ENCODE measurements at regions of chr14 and their contacts with region 1.

Region 1: DNA sequence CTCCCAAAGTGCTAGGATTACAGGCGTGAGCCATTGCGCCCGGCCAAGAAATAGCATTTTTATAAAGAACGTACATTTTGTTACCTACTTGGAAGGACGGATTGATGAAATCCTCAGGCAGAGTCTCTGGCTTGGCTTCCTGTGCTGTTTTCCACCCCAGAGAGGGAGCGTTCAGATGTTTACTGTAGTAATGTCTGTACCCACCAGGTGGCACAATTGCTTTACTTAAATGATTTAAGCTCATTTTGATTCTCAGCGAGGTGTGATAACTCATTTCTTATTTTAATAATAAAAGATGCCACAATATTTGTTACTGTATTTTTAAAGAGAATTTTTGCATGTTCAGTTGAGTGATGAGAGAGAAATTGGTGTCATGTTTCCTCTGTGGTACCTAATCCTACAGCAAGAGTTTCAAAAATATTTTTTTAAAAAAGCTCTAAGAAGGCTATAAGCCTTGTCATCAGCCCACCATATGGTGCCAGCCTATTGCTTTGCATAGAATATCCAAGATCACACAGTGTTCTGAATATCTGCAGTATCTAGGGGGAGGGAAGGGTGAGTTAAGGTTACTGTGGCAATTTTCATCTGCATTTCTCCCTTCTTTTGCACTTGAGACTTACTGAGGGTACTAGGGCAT is 82.6 kb upstream of the TRAF3 start:
- DNase-seq: peak; percentile 8 to 78 (median 59)
- ATAC-seq: peak; percentile 84
- H3K4me3 ChIP-seq: no peak overlapping the region
- H3K4me3 Mint-ChIP-seq: no peak overlapping the region
- H3K27ac ChIP-seq: no peak overlapping the region
- H3K27ac Mint-ChIP-seq: no peak overlapping the region
- H3K4me1 ChIP-seq: peaks cover 8% of the 10 kb centered on the region
- H3K4me1 Mint-ChIP-seq: peaks cover 38% of the 10 kb centered on the region
- H3K27me3 ChIP-seq: no peaks in the 10 kb centered on the region
- H3K27me3 Mint-ChIP-seq: no peaks in the 10 kb centered on the region
- CTCF ChIP-seq: peak; percentile 86

Region 2: GRCh38 chr14:101961011-101961721 is 733.5 kb before region 1 on chr14:
- CTCF ChIA-PET with region 1: no interaction called
- POLR2A ChIA-PET with region 1: no interaction called
- intact Hi-C with region 1: no loop called
- DNase-seq: peak; percentile 54 to 89 (median 78)
- ATAC-seq: peak; percentile 41
- H3K4me3 ChIP-seq: no peak overlapping the region
- H3K4me3 Mint-ChIP-seq: no peak overlapping the region
- H3K27ac ChIP-seq: no peak overlapping the region
- H3K27ac Mint-ChIP-seq: no peak overlapping the region
- H3K4me1 ChIP-seq: peaks cover 15% of the 10 kb centered on the region
- H3K4me1 Mint-ChIP-seq: peaks cover 23% of the 10 kb centered on the region
- H3K27me3 ChIP-seq: no peaks in the 10 kb centered on the region
- H3K27me3 Mint-ChIP-seq: no peaks in the 10 kb centered on the region
- CTCF ChIP-seq: peak; percentile 91

Region 3: GRCh38 chr14:102055216-102055918 is 639.3 kb before region 1 on chr14:
- CTCF ChIA-PET with region 1: no interaction called
- POLR2A ChIA-PET with region 1: no interaction called
- intact Hi-C with region 1: no loop called
- DNase-seq: no peak
- ATAC-seq: no peak
- H3K4me3 ChIP-seq: no peak overlapping the region
- H3K4me3 Mint-ChIP-seq: no peak overlapping the region
- H3K27ac ChIP-seq: no peak overlapping the region
- H3K27ac Mint-ChIP-seq: peak overlapping the region; percentile 37
- H3K4me1 ChIP-seq: no peaks in the 10 kb centered on the region
- H3K4me1 Mint-ChIP-seq: peaks cover 26% of the 10 kb centered on the region
- H3K27me3 ChIP-seq: no peaks in the 10 kb centered on the region
- H3K27me3 Mint-ChIP-seq: no peaks in the 10 kb centered on the region
- CTCF ChIP-seq: no peak

Region 4: GRCh38 chr14:102672410-102672960 is 22.2 kb before region 1 on chr14:
- CTCF ChIA-PET with region 1: no interaction called
- POLR2A ChIA-PET with region 1: no interaction called
- intact Hi-C with region 1: no loop called
- DNase-seq: no peak
- ATAC-seq: no peak
- H3K4me3 ChIP-seq: no peak overlapping the region
- H3K4me3 Mint-ChIP-seq: no peak overlapping the region
- H3K27ac ChIP-seq: no peak overlapping the region
- H3K27ac Mint-ChIP-seq: no peak overlapping the region
- H3K4me1 ChIP-seq: no peaks in the 10 kb centered on the region
- H3K4me1 Mint-ChIP-seq: peaks cover 16% of the 10 kb centered on the region
- H3K27me3 ChIP-seq: no peaks in the 10 kb centered on the region
- H3K27me3 Mint-ChIP-seq: no peaks in the 10 kb centered on the region
- CTCF ChIP-seq: no peak

Region 5: GRCh38 chr14:102684298-102684663 is 10.4 kb before region 1 on chr14:
- CTCF ChIA-PET with region 1: interaction called, 12 read pairs
- POLR2A ChIA-PET with region 1: no interaction called
- intact Hi-C with region 1: no loop called
- DNase-seq: no peak
- ATAC-seq: no peak
- H3K4me3 ChIP-seq: no peak overlapping the region
- H3K4me3 Mint-ChIP-seq: no peak overlapping the region
- H3K27ac ChIP-seq: no peak overlapping the region
- H3K27ac Mint-ChIP-seq: no peak overlapping the region
- H3K4me1 ChIP-seq: no peaks in the 10 kb centered on the region
- H3K4me1 Mint-ChIP-seq: peaks cover 23% of the 10 kb centered on the region
- H3K27me3 ChIP-seq: no peaks in the 10 kb centered on the region
- H3K27me3 Mint-ChIP-seq: no peaks in the 10 kb centered on the region
- CTCF ChIP-seq: no peak

Region 6: DNA sequence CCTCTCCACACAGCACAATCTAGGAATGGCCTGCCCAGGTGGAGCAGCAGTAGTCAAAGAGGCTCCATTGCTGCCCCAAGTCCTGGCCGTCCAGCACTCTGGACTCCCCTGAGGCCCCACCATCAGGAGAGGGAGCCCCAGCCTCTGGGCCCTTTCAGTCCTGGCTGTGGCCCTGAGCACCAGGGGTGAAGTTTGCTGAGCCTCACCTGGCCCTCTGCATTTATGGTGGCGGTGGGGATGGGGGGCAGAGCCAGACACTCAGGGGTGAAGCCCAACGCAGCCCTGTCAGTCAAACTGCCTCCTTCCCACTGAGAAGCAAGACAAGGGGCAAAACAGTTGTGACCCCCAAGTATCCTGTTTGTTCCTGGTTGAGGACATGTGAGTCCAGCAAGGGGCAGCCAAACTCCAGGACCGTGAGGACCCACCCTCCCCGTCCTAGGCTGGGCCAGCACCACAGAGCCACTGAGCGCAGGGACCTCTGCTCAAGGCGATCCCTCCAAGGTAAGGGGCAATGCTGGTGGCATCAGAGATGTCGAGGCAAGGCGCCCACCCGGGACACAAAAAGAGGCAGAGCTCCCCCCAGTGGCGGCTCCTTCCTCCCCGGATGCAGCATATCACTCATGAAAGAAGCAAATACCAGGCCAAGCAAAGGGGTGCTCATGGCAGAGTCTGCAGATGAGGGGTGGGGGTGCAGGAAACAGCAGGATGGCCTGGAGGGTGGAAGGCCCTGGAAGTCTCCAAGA is 223.0 kb after region 1 on chr14:
- CTCF ChIA-PET with region 1: interaction called, 37 read pairs
- POLR2A ChIA-PET with region 1: interaction called, 3 read pairs
- intact Hi-C with region 1: loop called (anchors 1 kb)
- DNase-seq: peak; percentile 45 to 79 (median 65)
- ATAC-seq: peak; percentile 74
- H3K4me3 ChIP-seq: no peak overlapping the region
- H3K4me3 Mint-ChIP-seq: no peak overlapping the region
- H3K27ac ChIP-seq: no peak overlapping the region
- H3K27ac Mint-ChIP-seq: no peak overlapping the region
- H3K4me1 ChIP-seq: peaks cover under 1% of the 10 kb centered on the region
- H3K4me1 Mint-ChIP-seq: no peaks in the 10 kb centered on the region
- H3K27me3 ChIP-seq: peaks cover 0 to 3% of the 10 kb centered on the region in 2 experiments
- H3K27me3 Mint-ChIP-seq: no peaks in the 10 kb centered on the region
- CTCF ChIP-seq: peak; percentile 46

Region 7: GRCh38 chr14:103008902-103009569 is 314.4 kb after region 1 on chr14:
- CTCF ChIA-PET with region 1: no interaction called
- POLR2A ChIA-PET with region 1: no interaction called
- intact Hi-C with region 1: loop called in 1 of 2 experiments (anchors 10 kb)
- DNase-seq: no peak
- ATAC-seq: no peak
- H3K4me3 ChIP-seq: no peak overlapping the region
- H3K4me3 Mint-ChIP-seq: no peak overlapping the region
- H3K27ac ChIP-seq: no peak overlapping the region
- H3K27ac Mint-ChIP-seq: no peak overlapping the region
- H3K4me1 ChIP-seq: no peaks in the 10 kb centered on the region
- H3K4me1 Mint-ChIP-seq: no peaks in the 10 kb centered on the region
- H3K27me3 ChIP-seq: no peaks in the 10 kb centered on the region
- H3K27me3 Mint-ChIP-seq: no peaks in the 10 kb centered on the region
- CTCF ChIP-seq: no peak

Region 8: DNA sequence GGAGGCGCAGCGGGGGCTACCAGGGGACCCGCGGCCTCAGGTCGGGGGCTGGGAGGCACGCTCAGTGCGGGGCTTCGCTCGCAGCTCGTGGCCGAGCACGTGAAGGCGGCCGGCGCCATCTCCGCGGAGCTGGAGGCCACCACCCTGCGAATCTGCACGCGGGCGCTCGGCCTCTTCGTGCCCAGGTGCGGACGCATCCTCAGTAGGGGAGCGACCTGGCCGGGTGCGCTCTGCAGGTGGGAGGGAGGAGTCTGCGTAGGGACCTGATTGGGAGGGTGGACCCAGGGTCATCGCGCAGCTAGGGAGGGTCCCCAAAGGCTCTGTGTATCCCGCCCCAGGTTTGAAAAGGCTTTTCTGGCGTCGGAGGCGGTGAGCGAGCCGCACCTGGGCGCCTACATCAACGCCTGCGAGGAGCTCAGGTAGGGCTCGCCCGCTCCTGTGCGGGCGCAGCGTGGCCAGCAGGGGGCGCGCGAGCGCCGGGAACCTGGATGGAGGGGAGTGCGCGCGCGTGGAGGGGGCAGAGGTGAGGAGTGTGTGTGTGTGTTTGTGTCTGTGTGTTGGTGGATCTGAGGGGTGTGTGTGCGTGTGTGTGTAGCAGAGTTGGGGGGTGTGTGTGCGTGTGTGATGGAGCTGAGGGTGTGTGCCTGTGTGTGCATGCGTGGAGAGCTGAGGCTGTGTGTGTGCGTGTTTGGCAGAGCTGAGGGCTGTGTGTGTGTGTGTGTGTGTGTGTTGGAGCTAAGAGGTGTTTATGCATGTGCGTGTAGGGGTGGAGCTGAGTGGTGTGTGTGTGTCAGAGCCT is 410.2 kb after region 1 on chr14:
- CTCF ChIA-PET with region 1: interaction called, 15 read pairs
- POLR2A ChIA-PET with region 1: no interaction called
- intact Hi-C with region 1: loop called (anchors 5 kb)
- DNase-seq: peak; percentile 55 to 85 (median 74)
- ATAC-seq: peak; percentile 89
- H3K4me3 ChIP-seq: no peak overlapping the region
- H3K4me3 Mint-ChIP-seq: no peak overlapping the region
- H3K27ac ChIP-seq: no peak overlapping the region
- H3K27ac Mint-ChIP-seq: peak overlapping the region; percentile 32
- H3K4me1 ChIP-seq: peaks cover 3% of the 10 kb centered on the region
- H3K4me1 Mint-ChIP-seq: peaks cover 9% of the 10 kb centered on the region
- H3K27me3 ChIP-seq: peaks cover 7 to 22% of the 10 kb centered on the region in 2 experiments
- H3K27me3 Mint-ChIP-seq: peaks cover 17% of the 10 kb centered on the region
- CTCF ChIP-seq: peak; percentile 71

Region 9: DNA sequence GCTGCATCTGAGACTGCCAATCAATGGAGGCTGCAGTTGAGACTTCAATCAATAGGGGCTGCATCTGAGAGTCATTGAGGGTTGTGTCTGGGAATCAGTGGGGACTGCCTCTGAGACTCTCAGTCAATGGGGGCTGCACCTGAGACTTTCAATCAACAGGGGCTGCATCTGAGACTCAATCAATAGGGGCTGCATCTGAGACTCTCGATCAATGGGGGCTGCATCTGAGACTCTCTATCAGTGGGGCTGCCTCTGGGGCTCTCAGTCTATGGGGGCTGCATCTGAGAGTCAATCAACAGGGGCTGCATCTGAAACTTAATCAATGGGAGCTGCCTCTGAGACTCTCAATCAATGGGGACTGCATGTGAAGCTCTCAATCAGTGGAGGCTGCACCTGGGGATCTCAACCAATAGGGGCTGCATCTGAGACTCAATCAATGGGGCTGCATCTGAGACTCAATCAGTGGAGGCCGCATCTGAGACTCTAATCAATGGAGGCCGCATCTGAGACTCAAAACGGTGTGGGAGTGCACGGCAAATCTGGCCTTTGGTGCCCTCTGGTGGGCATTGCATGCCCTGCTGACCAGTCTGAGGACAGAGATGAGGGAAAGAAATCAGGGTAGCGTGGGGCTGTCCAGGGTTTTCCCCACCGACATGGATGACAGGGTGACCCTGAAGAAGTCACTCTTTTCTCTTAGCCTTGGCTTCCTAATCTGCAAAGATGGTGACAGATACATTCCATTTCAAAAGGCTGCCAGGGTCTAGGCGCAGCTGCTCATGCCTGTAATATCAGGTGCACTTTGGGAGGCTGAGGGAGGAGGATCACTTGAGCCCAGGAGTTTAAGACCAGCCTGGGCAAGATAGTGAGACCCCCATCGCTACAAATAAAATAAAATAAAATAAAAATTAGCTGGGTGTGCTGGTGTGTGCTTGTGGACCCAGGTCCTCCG is 598.1 kb after region 1 on chr14:
- CTCF ChIA-PET with region 1: interaction called, 19 read pairs
- POLR2A ChIA-PET with region 1: no interaction called
- intact Hi-C with region 1: loop called (anchors 1 to 5 kb)
- DNase-seq: peak; percentile 39 to 82 (median 73)
- ATAC-seq: peak; percentile 86
- H3K4me3 ChIP-seq: no peak overlapping the region
- H3K4me3 Mint-ChIP-seq: no peak overlapping the region
- H3K27ac ChIP-seq: no peak overlapping the region
- H3K27ac Mint-ChIP-seq: no peak overlapping the region
- H3K4me1 ChIP-seq: no peaks in the 10 kb centered on the region
- H3K4me1 Mint-ChIP-seq: no peaks in the 10 kb centered on the region
- H3K27me3 ChIP-seq: peaks cover 0 to 2% of the 10 kb centered on the region in 2 experiments
- H3K27me3 Mint-ChIP-seq: peaks cover 15% of the 10 kb centered on the region
- CTCF ChIP-seq: peak; percentile 80

Measured in CD8-positive, alpha-beta T cell (primary cell).